Naive thymus-derived CD4-positive, alpha-beta T cell (primary cell): ENCODE measurements at regions of chr1 and their contacts with region 1.

Region 1: DNA sequence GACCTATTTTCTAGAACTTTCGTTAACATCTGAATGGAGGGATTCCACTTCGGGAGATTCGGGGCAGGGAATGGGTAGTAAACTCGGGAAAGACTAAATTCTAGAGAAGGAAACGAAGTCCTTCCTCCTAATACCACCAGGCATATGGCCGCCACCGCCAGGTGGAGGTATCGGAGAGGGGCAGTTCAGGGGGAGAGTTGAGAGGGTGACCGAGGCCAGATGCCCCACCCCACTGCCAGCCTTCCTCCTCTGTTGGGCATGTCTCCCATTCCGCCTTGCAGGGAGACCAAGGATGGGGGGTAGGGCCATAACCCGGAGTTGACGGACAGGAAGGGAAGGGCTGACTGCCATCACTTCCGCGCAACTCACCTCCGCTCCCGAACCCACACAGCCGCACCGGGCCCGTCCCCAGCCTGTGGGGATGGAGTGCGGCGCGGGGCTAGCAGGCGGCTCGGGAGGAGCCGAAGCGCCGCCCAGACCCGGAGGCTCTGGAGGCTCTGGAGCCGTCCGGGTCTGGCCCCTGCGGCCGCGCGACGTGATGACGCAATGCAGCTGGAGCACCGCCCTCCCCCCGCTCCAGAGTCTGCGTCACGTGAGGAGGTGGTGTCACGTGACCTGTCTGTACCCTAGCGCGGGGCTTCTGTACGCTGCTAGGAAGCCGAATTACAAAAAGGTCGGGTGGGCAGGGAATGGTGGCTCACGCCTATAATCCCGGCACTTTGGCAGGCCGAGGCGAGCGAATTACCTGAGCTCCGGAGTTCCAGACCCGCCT is at the start of gene KLHL12:
- DNase-seq: peak; percentile 88 to 95 (median 94)
- ATAC-seq: peak; percentile 97
- H3K4me3 ChIP-seq: peak within 1 kb of the TSS; percentile 97
- H3K4me3 Mint-ChIP-seq: peak within 1 kb of the TSS; percentile 90 to 96 (median 94)
- H3K27ac ChIP-seq: peak within 1 kb of the TSS; percentile 97
- H3K27ac Mint-ChIP-seq: peak within 1 kb of the TSS; percentile 92 to 97 (median 94)
- H3K4me1 ChIP-seq: peaks cover 19 to 26% of the 10 kb centered on the region in 2 donors
- H3K4me1 Mint-ChIP-seq: peaks cover 17 to 40% (median 34%) of the 10 kb centered on the region in 7 donors
- H3K27me3 ChIP-seq: no peaks in the 10 kb centered on the region
- H3K27me3 Mint-ChIP-seq: peaks cover 0 to 11% (median 0%) of the 10 kb centered on the region in 5 donors
- total RNA-seq, gene KLHL12: 15.6 to 28.0 (median 24.5) TPM

Region 2: GRCh38 chr1:203026031-203026989 is 99.4 kb after region 1 on chr1 and contains the start of gene PPFIA4:
- CTCF ChIA-PET with region 1: no interaction called
- POLR2A ChIA-PET with region 1: interaction called, 3 read pairs
- intact Hi-C with region 1: loop called (anchors 1 kb)
- DNase-seq: peak; percentile 72 to 94 (median 89)
- ATAC-seq: peak; percentile 98
- H3K4me3 ChIP-seq: peak within 1 kb of the TSS; percentile 84
- H3K4me3 Mint-ChIP-seq: peak within 1 kb of the TSS; percentile 74 to 95 (median 84)
- H3K27ac ChIP-seq: peak within 1 kb of the TSS; percentile 53
- H3K27ac Mint-ChIP-seq: peak within 1 kb of the TSS; percentile 73 to 96 (median 85)
- H3K4me1 ChIP-seq: peaks cover 0 to 11% of the 10 kb centered on the region in 2 donors
- H3K4me1 Mint-ChIP-seq: peaks cover 0 to 24% (median 14%) of the 10 kb centered on the region in 7 donors
- H3K27me3 ChIP-seq: no peaks in the 10 kb centered on the region
- H3K27me3 Mint-ChIP-seq: peaks cover 0 to 9% (median 0%) of the 10 kb centered on the region in 5 donors
- total RNA-seq, gene PPFIA4: 0.40 to 45.5 (median 2.4) TPM